Right ventricle myocardium inferior (tissue), 1 donor: ENCODE measurements at regions of chr2 and their contacts with region 1.

Region 1: GRCh38 chr2:47323009-47323821 is 79.7 kb upstream of the MSH2 start:
- DNase-seq: peak; percentile 87
- ATAC-seq: peak; percentile 94

Region 2: DNA sequence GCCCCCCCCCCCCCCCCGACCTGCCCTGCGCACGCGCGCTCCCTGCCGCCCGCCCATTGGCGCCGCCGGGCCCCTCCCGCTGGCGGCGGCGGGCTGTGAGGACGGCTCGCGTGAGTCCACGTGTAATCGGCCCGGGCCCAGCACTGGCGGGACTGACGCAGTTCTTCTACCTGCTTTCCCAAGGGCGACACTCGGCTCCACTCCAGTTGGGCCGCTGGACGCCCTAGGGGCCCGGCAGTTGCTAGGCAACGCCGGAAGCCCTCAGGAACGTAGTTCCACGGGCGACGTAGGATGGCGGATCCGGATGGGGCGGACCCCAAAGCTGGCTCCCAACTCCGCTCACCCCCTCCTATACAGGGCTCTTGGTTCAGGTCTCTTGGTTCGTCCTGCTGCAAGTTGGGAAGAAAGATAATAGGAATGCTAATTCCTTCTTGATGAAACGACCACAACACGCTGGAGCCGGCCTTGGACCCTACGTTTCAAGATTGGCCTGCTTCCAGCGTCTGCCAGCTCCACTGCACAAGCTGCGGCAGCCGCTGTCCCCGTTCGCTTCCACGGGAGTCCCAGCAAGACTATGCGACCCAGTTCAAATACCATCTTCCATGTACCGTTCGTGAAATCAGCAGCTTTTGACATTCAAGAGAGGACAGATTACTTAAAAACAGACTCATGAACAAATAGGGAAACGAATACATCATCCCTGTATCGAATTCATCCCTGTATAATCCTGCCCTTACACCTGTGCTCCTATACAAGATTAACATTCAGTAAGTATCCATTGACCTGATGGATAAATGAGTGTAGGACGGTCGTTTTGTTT is 407.2 kb before region 1 on chr2:
- intact Hi-C with region 1: loop called (anchors 2 kb)
- DNase-seq: peak; percentile 95
- ATAC-seq: peak; percentile 94

Region 3: GRCh38 chr2:47195149-47195548 is 128.1 kb before region 1 on chr2:
- intact Hi-C with region 1: no loop called
- DNase-seq: no peak
- ATAC-seq: no peak

Region 4: DNA sequence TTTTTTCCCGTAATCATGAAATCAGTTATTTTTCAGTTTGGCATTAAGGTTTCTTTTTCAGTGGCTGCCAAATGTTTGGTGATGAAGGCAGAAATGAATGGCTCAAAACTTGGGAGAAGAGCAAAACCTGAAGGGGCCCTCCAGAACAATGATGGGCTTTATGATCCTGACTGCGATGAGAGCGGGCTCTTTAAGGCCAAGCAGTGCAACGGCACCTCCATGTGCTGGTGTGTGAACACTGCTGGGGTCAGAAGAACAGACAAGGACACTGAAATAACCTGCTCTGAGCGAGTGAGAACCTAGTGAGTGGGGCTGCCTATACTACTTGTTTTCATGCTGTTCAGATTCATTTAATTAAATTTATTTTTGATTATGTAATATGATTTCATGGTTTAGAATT is 50.5 kb after region 1 on chr2:
- intact Hi-C with region 1: no loop called
- DNase-seq: no peak
- ATAC-seq: no peak

Region 5: GRCh38 chr2:48668992-48669391 is 1345.8 kb after region 1 on chr2:
- intact Hi-C with region 1: no loop called
- DNase-seq: no peak
- ATAC-seq: no peak